Activated B cell treated with CpG ODN at 0.5 μM for 24 hours (primary cell): ENCODE measurements at regions of chr7 and their contacts with region 1.

Region 1: GRCh38 chr7:134646425-134647305 is at the start of gene BPGM:
- DNase-seq: peak; percentile 82
- ATAC-seq: peak; percentile 95
- H3K4me3 Mint-ChIP-seq: no peak within 1 kb of the TSS
- H3K27ac Mint-ChIP-seq: no peak within 1 kb of the TSS
- H3K4me1 Mint-ChIP-seq: peaks cover 19% of the 10 kb centered on the region
- H3K27me3 Mint-ChIP-seq: no peaks in the 10 kb centered on the region
- CTCF ChIP-seq: peak; percentile 22
- total RNA-seq, gene BPGM: 10.1 and 10.2 TPM in 2 replicates

Region 2: DNA sequence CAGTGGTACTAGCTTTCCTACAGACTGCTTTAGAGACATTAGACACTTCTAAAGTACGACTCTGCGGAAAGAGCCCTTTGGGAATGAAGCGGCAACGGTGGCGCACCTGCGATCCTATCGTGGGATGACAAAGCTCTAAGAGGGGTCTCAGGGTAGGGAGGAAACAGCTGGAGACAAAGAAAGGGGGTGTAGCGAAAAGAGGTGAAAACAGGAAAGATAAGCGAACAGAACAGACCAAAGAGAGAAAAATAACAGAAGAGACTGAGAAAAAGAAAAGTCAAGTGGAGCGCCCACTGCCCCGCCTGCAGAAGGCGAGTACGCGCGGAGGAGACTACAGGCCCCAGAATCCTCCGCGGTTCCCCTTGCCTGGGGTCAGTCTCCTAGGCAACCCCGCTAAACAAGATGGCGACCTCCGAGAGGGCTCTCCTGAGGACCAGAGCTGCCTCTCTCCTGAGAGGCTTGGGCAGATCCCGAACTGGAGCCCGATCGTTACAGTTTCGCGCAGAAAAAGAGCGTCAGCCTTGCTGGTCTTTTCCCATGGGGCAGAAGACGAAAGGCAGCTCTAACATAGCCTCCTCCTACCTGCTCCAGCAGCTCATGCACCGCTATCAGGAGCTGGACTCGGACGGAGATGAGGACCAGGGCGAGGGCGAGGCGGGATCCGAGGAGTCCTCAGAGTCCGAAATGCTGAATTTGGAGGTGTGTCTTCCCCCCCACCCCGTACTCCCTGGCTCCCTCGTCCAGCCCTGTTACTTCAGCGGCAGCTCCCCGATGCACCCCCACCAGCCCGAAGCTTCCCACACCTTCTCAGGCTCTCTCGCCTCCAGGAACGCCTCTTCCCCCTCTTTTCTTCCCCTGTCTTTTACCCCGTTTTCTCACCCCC is 519.5 kb before region 1 on chr7 and contains the start of gene LRGUK:
- CTCF ChIA-PET with region 1: no interaction called
- POLR2A ChIA-PET with region 1: no interaction called
- intact Hi-C with region 1: loop called (anchors 1 kb)
- DNase-seq: peak; percentile 65
- ATAC-seq: peak; percentile 100
- H3K4me3 Mint-ChIP-seq: peak within 1 kb of the TSS; percentile 88
- H3K27ac Mint-ChIP-seq: no peak within 1 kb of the TSS
- H3K4me1 Mint-ChIP-seq: peaks cover 12% of the 10 kb centered on the region
- H3K27me3 Mint-ChIP-seq: peaks cover 4% of the 10 kb centered on the region
- CTCF ChIP-seq: no peak
- total RNA-seq, gene LRGUK: 0.91 and 1.0 TPM in 2 replicates

Region 3: GRCh38 chr7:134414109-134414508 is 232.6 kb before region 1 on chr7:
- CTCF ChIA-PET with region 1: no interaction called
- POLR2A ChIA-PET with region 1: no interaction called
- intact Hi-C with region 1: no loop called
- DNase-seq: no peak
- ATAC-seq: no peak
- H3K4me3 Mint-ChIP-seq: no peak overlapping the region
- H3K27ac Mint-ChIP-seq: no peak overlapping the region
- H3K4me1 Mint-ChIP-seq: no peaks in the 10 kb centered on the region
- H3K27me3 Mint-ChIP-seq: peaks cover 3% of the 10 kb centered on the region
- CTCF ChIP-seq: no peak

Region 4: DNA sequence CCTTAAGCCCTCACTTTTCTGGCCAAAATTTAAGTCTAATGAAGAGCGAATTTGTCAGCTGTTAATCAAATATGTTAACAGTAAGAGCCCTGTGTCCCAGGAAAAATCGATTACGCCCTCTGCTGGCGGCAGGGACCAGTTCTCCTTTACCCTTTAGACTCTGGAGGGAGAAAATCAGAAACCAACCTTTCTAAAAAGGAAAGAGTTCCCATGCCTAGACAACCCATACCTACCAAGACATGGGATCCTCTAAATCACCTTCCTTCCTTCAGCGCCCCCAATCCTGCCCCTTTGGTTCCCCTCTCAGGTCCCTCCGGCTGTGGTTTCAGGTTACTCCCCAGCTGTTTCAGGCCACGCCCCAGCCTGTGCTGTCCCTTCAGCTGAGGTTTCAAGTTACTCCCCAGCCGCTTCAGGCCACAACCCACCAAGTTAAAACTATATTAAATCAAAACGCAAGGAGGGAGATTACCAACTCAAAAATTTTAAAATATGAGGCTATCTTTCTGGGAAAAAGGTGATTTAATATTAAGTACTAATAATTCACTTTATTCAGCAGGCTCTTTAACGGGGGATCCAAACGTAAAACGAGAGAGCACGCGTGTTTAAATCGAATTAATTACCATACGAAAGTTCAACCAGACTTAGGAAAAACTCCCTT is 99.1 kb before region 1 on chr7:
- CTCF ChIA-PET with region 1: no interaction called
- POLR2A ChIA-PET with region 1: no interaction called
- intact Hi-C with region 1: no loop called
- DNase-seq: peak; percentile 42
- ATAC-seq: peak; percentile 78
- H3K4me3 Mint-ChIP-seq: peak overlapping the region; percentile 58
- H3K27ac Mint-ChIP-seq: no peak overlapping the region
- H3K4me1 Mint-ChIP-seq: peaks cover 11% of the 10 kb centered on the region
- H3K27me3 Mint-ChIP-seq: peaks cover 14% of the 10 kb centered on the region
- CTCF ChIP-seq: no peak

Region 5: GRCh38 chr7:134587750-134588149 is 58.9 kb before region 1 on chr7:
- CTCF ChIA-PET with region 1: no interaction called
- POLR2A ChIA-PET with region 1: no interaction called
- intact Hi-C with region 1: no loop called
- DNase-seq: no peak
- ATAC-seq: no peak
- H3K4me3 Mint-ChIP-seq: no peak overlapping the region
- H3K27ac Mint-ChIP-seq: no peak overlapping the region
- H3K4me1 Mint-ChIP-seq: no peaks in the 10 kb centered on the region
- H3K27me3 Mint-ChIP-seq: peaks cover 14% of the 10 kb centered on the region
- CTCF ChIP-seq: no peak

Region 6: GRCh38 chr7:134632937-134633540 is 13.6 kb before region 1 on chr7:
- CTCF ChIA-PET with region 1: interaction called, 46 read pairs
- POLR2A ChIA-PET with region 1: interaction called, 16 read pairs
- intact Hi-C with region 1: loop called (anchors 1 kb)
- DNase-seq: no peak
- ATAC-seq: peak; percentile 71
- H3K4me3 Mint-ChIP-seq: no peak overlapping the region
- H3K27ac Mint-ChIP-seq: no peak overlapping the region
- H3K4me1 Mint-ChIP-seq: peaks cover 10% of the 10 kb centered on the region
- H3K27me3 Mint-ChIP-seq: peaks cover 14% of the 10 kb centered on the region
- CTCF ChIP-seq: no peak

Region 7: DNA sequence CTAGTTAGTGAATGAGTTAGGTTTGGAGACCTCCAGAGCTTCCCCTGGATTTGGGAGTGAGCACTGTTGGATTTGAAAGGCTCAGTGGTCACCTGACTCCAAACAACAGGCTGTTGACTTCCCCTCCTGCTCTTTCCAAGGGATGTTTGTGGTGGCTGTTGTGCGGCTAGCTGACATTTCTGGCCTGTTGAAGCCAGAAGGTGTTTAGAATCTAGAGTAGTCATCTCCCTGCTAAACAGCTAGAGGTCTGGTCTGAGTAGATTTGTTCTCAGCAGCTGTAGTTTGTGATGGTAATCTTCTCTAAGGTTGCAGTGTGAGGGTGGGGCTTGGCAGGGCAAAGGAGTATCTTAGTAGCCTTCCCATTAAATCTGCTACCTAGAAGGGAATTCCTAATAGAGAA is 30.1 kb after region 1 on chr7:
- CTCF ChIA-PET with region 1: no interaction called
- POLR2A ChIA-PET with region 1: no interaction called
- intact Hi-C with region 1: no loop called
- DNase-seq: no peak
- ATAC-seq: no peak
- H3K4me3 Mint-ChIP-seq: no peak overlapping the region
- H3K27ac Mint-ChIP-seq: no peak overlapping the region
- H3K4me1 Mint-ChIP-seq: peaks cover 13% of the 10 kb centered on the region
- H3K27me3 Mint-ChIP-seq: no peaks in the 10 kb centered on the region
- CTCF ChIP-seq: no peak

Region 8: GRCh38 chr7:134782121-134782623 is 135.5 kb after region 1 on chr7:
- CTCF ChIA-PET with region 1: no interaction called
- POLR2A ChIA-PET with region 1: interaction called, 6 read pairs
- intact Hi-C with region 1: loop called (anchors 1 kb)
- DNase-seq: no peak
- ATAC-seq: peak; percentile 86
- H3K4me3 Mint-ChIP-seq: peak overlapping the region; percentile 42
- H3K27ac Mint-ChIP-seq: peak overlapping the region; percentile 59
- H3K4me1 Mint-ChIP-seq: no peaks in the 10 kb centered on the region
- H3K27me3 Mint-ChIP-seq: peaks cover 15% of the 10 kb centered on the region
- CTCF ChIP-seq: no peak

Region 9: GRCh38 chr7:135186841-135187253 is 540.2 kb after region 1 on chr7:
- CTCF ChIA-PET with region 1: no interaction called
- POLR2A ChIA-PET with region 1: interaction called, 6 read pairs
- intact Hi-C with region 1: loop called (anchors 1 kb)
- DNase-seq: peak; percentile 60
- ATAC-seq: peak; percentile 76
- H3K4me3 Mint-ChIP-seq: peak overlapping the region; percentile 74
- H3K27ac Mint-ChIP-seq: peak overlapping the region; percentile 80
- H3K4me1 Mint-ChIP-seq: peaks cover 51% of the 10 kb centered on the region
- H3K27me3 Mint-ChIP-seq: no peaks in the 10 kb centered on the region
- CTCF ChIP-seq: no peak

Region 10: GRCh38 chr7:135662373-135663114 is 1015.9 kb after region 1 on chr7 and contains the start of gene STMP1:
- CTCF ChIA-PET with region 1: no interaction called
- POLR2A ChIA-PET with region 1: interaction called, 3 read pairs
- intact Hi-C with region 1: loop called (anchors 1 kb)
- DNase-seq: peak; percentile 96
- ATAC-seq: peak; percentile 98
- H3K4me3 Mint-ChIP-seq: peak within 1 kb of the TSS; percentile 91
- H3K27ac Mint-ChIP-seq: peak within 1 kb of the TSS; percentile 79
- H3K4me1 Mint-ChIP-seq: peaks cover 39% of the 10 kb centered on the region
- H3K27me3 Mint-ChIP-seq: no peaks in the 10 kb centered on the region
- CTCF ChIP-seq: no peak
- total RNA-seq, gene STMP1: 24.2 and 26.2 TPM in 2 replicates